ENCODE measurements at regions of chr3 and their contacts with region 1.

Region 1: GRCh38 chr3:23113455-23114171 is 89.5 kb upstream of the UBE2E2 start:
- DNase-seq: peak in 1 of 2 experiments; percentile 65
- H3K4me3 ChIP-seq: no peak overlapping the region
- H3K27ac ChIP-seq: no peak overlapping the region
- H3K4me1 ChIP-seq: peaks cover 35% of the 10 kb centered on the region
- H3K27me3 ChIP-seq: peaks cover 59% of the 10 kb centered on the region
- CTCF ChIP-seq: no peak

Region 2: GRCh38 chr3:22542311-22542710 is 571.3 kb before region 1 on chr3:
- CTCF ChIA-PET with region 1: no interaction called
- POLR2A ChIA-PET with region 1: no interaction called
- intact Hi-C with region 1: no loop called
- DNase-seq: peak in 1 of 2 experiments; percentile 37
- H3K4me3 ChIP-seq: no peak overlapping the region
- H3K27ac ChIP-seq: no peak overlapping the region
- H3K4me1 ChIP-seq: no peaks in the 10 kb centered on the region
- H3K27me3 ChIP-seq: no peaks in the 10 kb centered on the region
- CTCF ChIP-seq: no peak

Region 3: DNA sequence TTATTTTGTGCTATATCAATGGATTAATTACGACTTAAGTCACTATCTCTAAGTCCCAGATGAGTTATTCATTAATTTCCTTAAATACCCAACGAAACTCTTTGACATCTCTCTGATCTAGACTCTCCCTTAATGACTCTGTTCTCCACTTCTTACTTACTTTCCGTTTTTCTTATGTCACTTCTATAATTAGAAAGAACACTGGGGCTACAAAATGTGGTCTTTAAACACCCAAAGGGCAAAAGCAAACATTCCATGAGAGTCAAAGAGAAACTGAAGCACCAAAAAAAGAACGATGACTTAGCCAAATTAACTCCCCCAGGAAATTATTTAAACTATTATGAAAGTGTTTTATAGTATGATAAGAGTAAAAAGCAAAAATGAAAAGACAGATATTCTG is 76.9 kb before region 1 on chr3:
- CTCF ChIA-PET with region 1: no interaction called
- POLR2A ChIA-PET with region 1: no interaction called
- intact Hi-C with region 1: loop called (anchors 2 kb)
- DNase-seq: no peak
- H3K4me3 ChIP-seq: no peak overlapping the region
- H3K27ac ChIP-seq: no peak overlapping the region
- H3K4me1 ChIP-seq: peaks cover 11% of the 10 kb centered on the region; the same call in 1 of the 2 replicates
- H3K27me3 ChIP-seq: no peaks in the 10 kb centered on the region
- CTCF ChIP-seq: no peak

Region 4: GRCh38 chr3:23095017-23095416 is 18.6 kb before region 1 on chr3:
- CTCF ChIA-PET with region 1: no interaction called
- POLR2A ChIA-PET with region 1: no interaction called
- intact Hi-C with region 1: loop called (anchors 2 kb)
- DNase-seq: peak; percentile 56 to 87
- H3K4me3 ChIP-seq: no peak overlapping the region
- H3K27ac ChIP-seq: no peak overlapping the region
- H3K4me1 ChIP-seq: peaks cover 12% of the 10 kb centered on the region; the same call in 1 of the 2 replicates
- H3K27me3 ChIP-seq: peaks cover 3% of the 10 kb centered on the region; the same call in 1 of the 2 replicates
- CTCF ChIP-seq: no peak

Region 5: GRCh38 chr3:23161896-23162570 is 48.4 kb after region 1 on chr3:
- CTCF ChIA-PET with region 1: no interaction called
- POLR2A ChIA-PET with region 1: no interaction called
- intact Hi-C with region 1: loop called (anchors 2 kb)
- DNase-seq: peak; percentile 5 to 46
- H3K4me3 ChIP-seq: no peak overlapping the region
- H3K27ac ChIP-seq: peak overlapping the region; percentile 45
- H3K4me1 ChIP-seq: peaks cover 34% of the 10 kb centered on the region
- H3K27me3 ChIP-seq: no peaks in the 10 kb centered on the region
- CTCF ChIP-seq: no peak